SK-N-SH (cell line): ENCODE measurements at regions of chr20 and their contacts with region 1.

Region 1: GRCh38 chr20:52312132-52312729 is 120.7 kb upstream of the ZFP64 start:
- DNase-seq: peak; percentile 70
- H3K4me3 ChIP-seq: peak overlapping the region in 1 of 2 experiments; percentile 14; a peak in 1 of 4 replicates
- H3K27ac ChIP-seq: no peak overlapping the region
- H3K4me1 ChIP-seq: peaks cover 0 to 4% of the 10 kb centered on the region in 2 experiments; a peak in 2 of 4 replicates
- H3K27me3 ChIP-seq: no peaks in the 10 kb centered on the region
- CTCF ChIP-seq: peak; percentile 86
- EP300 ChIP-seq: no peak
- RAD21 ChIP-seq: peak; percentile 89

Region 2: DNA sequence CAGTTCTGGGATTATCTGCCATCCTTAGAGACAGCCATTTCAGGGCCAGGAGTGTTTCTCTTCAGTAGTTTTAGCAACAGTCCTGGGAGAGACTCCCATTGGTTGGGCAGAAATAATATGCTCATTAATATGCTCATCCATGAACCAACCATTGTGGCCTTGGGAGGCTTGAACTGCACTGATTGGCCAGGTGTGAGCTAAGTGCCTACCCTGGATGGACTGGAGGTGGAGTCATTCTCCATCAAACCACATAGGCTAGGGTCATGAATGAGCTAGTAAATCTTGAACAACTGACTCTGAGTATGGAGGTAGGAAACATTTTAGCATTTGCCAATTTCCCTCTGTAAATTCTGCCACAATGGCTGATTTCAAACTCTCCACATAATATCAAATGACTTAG is 50.4 kb before region 1 on chr20:
- CTCF ChIA-PET with region 1: interaction called, 13 read pairs
- POLR2A ChIA-PET with region 1: no interaction called
- DNase-seq: no peak
- H3K4me3 ChIP-seq: no peak overlapping the region
- H3K27ac ChIP-seq: no peak overlapping the region
- H3K4me1 ChIP-seq: peaks cover 0 to 10% of the 10 kb centered on the region in 2 experiments; a peak in 2 of 4 replicates
- H3K27me3 ChIP-seq: no peaks in the 10 kb centered on the region
- CTCF ChIP-seq: no peak
- EP300 ChIP-seq: no peak
- RAD21 ChIP-seq: no peak

Region 3: DNA sequence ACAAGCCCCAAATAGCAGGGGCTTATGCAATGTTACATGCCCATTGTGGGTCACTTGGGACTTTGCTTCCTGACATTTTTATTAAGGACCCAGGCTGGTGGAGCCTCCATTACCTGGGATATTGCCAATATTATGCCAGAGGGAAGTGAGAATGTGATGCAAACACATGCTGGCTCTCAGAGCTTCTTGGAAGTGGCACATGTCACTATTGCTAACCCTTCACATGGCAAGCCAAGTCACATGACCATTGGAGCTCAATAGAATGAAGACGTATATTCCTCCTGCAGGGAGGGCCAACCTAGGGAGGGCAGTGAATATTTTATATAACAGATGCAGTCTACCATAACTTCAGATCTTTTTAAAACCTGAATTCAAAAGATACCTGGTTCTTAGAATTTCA is 20.0 kb after region 1 on chr20:
- CTCF ChIA-PET with region 1: interaction called, 15 read pairs
- POLR2A ChIA-PET with region 1: no interaction called
- DNase-seq: no peak
- H3K4me3 ChIP-seq: no peak overlapping the region
- H3K27ac ChIP-seq: no peak overlapping the region
- H3K4me1 ChIP-seq: no peaks in the 10 kb centered on the region
- H3K27me3 ChIP-seq: no peaks in the 10 kb centered on the region
- CTCF ChIP-seq: no peak
- EP300 ChIP-seq: no peak
- RAD21 ChIP-seq: no peak

Region 4: GRCh38 chr20:52379723-52380336 is 67.6 kb after region 1 on chr20:
- CTCF ChIA-PET with region 1: interaction called, 95 read pairs
- POLR2A ChIA-PET with region 1: no interaction called
- DNase-seq: peak; percentile 42
- H3K4me3 ChIP-seq: no peak overlapping the region; a peak in 1 of 4 replicates
- H3K27ac ChIP-seq: no peak overlapping the region
- H3K4me1 ChIP-seq: no peaks in the 10 kb centered on the region
- H3K27me3 ChIP-seq: no peaks in the 10 kb centered on the region
- CTCF ChIP-seq: peak; percentile 92
- EP300 ChIP-seq: no peak
- RAD21 ChIP-seq: peak; percentile 79

Region 5: GRCh38 chr20:52959125-52959524 is 646.9 kb after region 1 on chr20:
- CTCF ChIA-PET with region 1: interaction called, 13 read pairs
- POLR2A ChIA-PET with region 1: no interaction called
- DNase-seq: peak; percentile 78
- H3K4me3 ChIP-seq: no peak overlapping the region
- H3K27ac ChIP-seq: peak overlapping the region; percentile 47 to 97
- H3K4me1 ChIP-seq: peaks cover 10 to 12% of the 10 kb centered on the region in 2 experiments; a peak in 3 of 4 replicates
- H3K27me3 ChIP-seq: no peaks in the 10 kb centered on the region
- CTCF ChIP-seq: no peak
- EP300 ChIP-seq: peak in 1 of 2 experiments; percentile 92; a peak in 2 of 4 replicates
- RAD21 ChIP-seq: peak; percentile 41

Region 6: GRCh38 chr20:53547664-53548239 is 1235.5 kb after region 1 on chr20:
- CTCF ChIA-PET with region 1: interaction called, 109 read pairs
- POLR2A ChIA-PET with region 1: interaction called, 3 read pairs
- DNase-seq: peak; percentile 71
- H3K4me3 ChIP-seq: peak overlapping the region in 1 of 2 experiments; percentile 9; a peak in 1 of 4 replicates
- H3K27ac ChIP-seq: 0 out of 4 replicates have a peak overlapping the region, but pooled peaks of 1 of the 2 experiments have one; percentile 3
- H3K4me1 ChIP-seq: peaks cover 0 to 4% of the 10 kb centered on the region in 2 experiments; a peak in 1 of 4 replicates
- H3K27me3 ChIP-seq: no peaks in the 10 kb centered on the region
- CTCF ChIP-seq: peak; percentile 81
- EP300 ChIP-seq: no peak; a peak in 1 of 4 replicates
- RAD21 ChIP-seq: peak; percentile 98